Activated CD4-positive, alpha-beta memory T cell treated with anti-CD3 and anti-CD28 coated beads for 36 hours (primary cell): ENCODE measurements at regions of chr5 and their contacts with region 1.

Region 1: GRCh38 chr5:143182901-143183820 is 220.3 kb downstream of the NR3C1 start:
- DNase-seq: peak; percentile 89
- H3K4me3 Mint-ChIP-seq: peak overlapping the region; percentile 57
- H3K27ac Mint-ChIP-seq: peak overlapping the region; percentile 90
- H3K4me1 Mint-ChIP-seq: peaks cover 56% of the 10 kb centered on the region
- H3K27me3 Mint-ChIP-seq: no peaks in the 10 kb centered on the region

Region 2: GRCh38 chr5:142685418-142686209 is 497.5 kb before region 1 on chr5 and contains the start of gene FGF1:
- CTCF ChIA-PET with region 1: no interaction called
- POLR2A ChIA-PET with region 1: no interaction called
- intact Hi-C with region 1: no loop called
- DNase-seq: no peak
- H3K4me3 Mint-ChIP-seq: no peak within 1 kb of the TSS
- H3K27ac Mint-ChIP-seq: no peak within 1 kb of the TSS
- H3K4me1 Mint-ChIP-seq: no peaks in the 10 kb centered on the region
- H3K27me3 Mint-ChIP-seq: peaks cover 6% of the 10 kb centered on the region
- total RNA-seq, gene FGF1: not detected

Region 3: DNA sequence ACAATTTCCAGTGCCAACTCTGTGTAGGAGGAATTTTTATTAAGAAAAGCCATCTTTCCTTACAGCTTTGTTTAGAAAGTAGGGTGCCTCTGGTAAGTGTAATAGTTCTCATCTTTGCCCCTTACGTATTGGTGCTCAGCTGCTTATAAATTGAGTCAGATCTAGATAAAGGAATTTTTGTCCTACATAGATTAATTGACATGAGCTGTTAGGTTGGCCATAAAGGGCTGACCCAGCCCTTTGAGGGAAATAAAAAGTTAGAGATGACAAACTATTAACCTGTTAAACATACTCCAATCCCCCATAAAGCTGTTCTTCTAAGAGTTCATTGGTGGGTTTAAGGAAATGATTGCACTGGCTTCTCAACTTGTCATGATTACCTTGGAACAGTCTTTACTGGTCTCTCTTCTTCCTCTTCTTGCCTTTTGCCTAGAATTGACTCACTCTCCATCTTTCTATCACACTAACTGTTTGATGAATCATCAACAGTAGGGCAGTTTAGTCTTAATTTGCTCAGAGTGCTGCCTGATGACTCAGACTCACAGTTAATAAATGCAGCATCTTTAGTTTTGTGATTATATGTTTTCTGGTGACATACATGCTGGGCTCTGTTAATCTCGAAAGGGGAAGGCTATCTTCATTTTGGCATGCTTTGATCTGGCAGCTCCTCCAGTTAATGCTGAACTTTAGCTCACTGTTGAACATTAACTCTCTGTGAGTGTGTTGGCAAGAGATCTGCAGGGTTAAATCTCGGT is 361.3 kb before region 1 on chr5:
- CTCF ChIA-PET with region 1: no interaction called
- POLR2A ChIA-PET with region 1: no interaction called
- intact Hi-C with region 1: loop called (anchors 10 kb)
- DNase-seq: peak; percentile 35
- H3K4me3 Mint-ChIP-seq: no peak overlapping the region
- H3K27ac Mint-ChIP-seq: peak overlapping the region; percentile 83
- H3K4me1 Mint-ChIP-seq: peaks cover 71% of the 10 kb centered on the region
- H3K27me3 Mint-ChIP-seq: no peaks in the 10 kb centered on the region

Region 4: DNA sequence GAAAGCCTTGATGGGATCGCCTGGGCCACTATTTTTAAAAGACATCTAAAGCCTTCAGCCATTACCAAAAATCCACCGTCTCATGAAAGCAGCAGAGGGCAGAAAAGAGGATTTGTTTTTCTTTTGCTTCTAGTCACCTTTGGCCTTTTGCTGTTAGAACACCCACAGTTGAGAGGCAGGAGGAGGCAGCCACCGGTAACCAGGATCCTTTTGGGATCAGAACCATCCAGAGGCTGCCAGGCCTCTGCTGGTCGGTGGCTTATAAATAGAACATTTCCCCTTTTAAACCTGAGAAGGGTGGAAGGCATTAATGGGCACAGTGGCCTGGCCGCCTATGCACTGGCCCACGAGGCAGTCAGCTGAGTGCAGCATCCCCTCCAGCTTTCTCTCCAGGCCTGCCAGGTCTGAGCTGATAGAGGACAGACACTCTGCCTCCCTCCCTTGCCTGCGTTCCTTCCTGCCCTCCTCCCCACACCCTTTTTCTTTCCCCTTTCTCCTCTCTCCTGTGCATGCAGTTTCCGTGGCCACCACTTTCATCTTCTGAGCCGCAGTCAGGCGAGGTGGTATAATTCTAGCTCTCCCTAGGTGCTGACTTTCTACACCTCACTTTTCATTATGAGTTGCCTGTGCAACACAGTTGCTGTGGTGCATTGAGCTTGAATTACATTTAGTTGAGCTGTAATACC is 159.6 kb before region 1 on chr5:
- CTCF ChIA-PET with region 1: no interaction called
- POLR2A ChIA-PET with region 1: no interaction called
- intact Hi-C with region 1: loop called (anchors 2 kb)
- DNase-seq: peak; percentile 85
- H3K4me3 Mint-ChIP-seq: no peak overlapping the region
- H3K27ac Mint-ChIP-seq: peak overlapping the region; percentile 59
- H3K4me1 Mint-ChIP-seq: peaks cover 53% of the 10 kb centered on the region
- H3K27me3 Mint-ChIP-seq: no peaks in the 10 kb centered on the region

Region 5: GRCh38 chr5:143051244-143052058 is 131.7 kb before region 1 on chr5:
- CTCF ChIA-PET with region 1: no interaction called
- POLR2A ChIA-PET with region 1: interaction called, 3 read pairs
- intact Hi-C with region 1: loop called (anchors 1 kb)
- DNase-seq: no peak
- H3K4me3 Mint-ChIP-seq: no peak overlapping the region
- H3K27ac Mint-ChIP-seq: no peak overlapping the region
- H3K4me1 Mint-ChIP-seq: peaks cover 66% of the 10 kb centered on the region
- H3K27me3 Mint-ChIP-seq: no peaks in the 10 kb centered on the region

Region 6: DNA sequence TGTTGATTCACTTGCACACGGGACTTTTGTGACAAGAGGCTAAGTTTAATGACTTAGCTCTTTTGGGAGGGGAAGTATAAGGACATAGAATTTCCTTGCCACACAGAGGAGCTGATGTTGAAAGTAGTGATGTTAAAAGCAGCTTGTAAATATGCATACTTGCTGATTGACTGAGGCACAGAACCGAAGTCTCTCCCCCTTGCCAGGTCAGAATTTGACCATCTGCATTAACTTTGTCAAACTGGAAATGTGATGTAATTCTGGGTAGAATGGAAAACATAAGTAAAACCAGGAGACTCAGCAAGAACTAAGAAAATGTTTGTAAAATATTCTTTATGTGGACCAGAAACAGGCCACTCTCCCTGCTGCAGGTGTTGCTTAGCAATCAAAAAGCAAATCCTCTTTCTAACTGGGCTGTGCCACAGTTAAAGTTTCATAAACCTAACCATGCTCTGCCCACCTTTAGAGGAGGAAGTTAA is 63.8 kb before region 1 on chr5:
- CTCF ChIA-PET with region 1: no interaction called
- POLR2A ChIA-PET with region 1: no interaction called
- intact Hi-C with region 1: loop called (anchors 1 kb)
- DNase-seq: peak; percentile 27
- H3K4me3 Mint-ChIP-seq: no peak overlapping the region
- H3K27ac Mint-ChIP-seq: peak overlapping the region; percentile 82
- H3K4me1 Mint-ChIP-seq: peaks cover 41% of the 10 kb centered on the region
- H3K27me3 Mint-ChIP-seq: no peaks in the 10 kb centered on the region

Region 7: DNA sequence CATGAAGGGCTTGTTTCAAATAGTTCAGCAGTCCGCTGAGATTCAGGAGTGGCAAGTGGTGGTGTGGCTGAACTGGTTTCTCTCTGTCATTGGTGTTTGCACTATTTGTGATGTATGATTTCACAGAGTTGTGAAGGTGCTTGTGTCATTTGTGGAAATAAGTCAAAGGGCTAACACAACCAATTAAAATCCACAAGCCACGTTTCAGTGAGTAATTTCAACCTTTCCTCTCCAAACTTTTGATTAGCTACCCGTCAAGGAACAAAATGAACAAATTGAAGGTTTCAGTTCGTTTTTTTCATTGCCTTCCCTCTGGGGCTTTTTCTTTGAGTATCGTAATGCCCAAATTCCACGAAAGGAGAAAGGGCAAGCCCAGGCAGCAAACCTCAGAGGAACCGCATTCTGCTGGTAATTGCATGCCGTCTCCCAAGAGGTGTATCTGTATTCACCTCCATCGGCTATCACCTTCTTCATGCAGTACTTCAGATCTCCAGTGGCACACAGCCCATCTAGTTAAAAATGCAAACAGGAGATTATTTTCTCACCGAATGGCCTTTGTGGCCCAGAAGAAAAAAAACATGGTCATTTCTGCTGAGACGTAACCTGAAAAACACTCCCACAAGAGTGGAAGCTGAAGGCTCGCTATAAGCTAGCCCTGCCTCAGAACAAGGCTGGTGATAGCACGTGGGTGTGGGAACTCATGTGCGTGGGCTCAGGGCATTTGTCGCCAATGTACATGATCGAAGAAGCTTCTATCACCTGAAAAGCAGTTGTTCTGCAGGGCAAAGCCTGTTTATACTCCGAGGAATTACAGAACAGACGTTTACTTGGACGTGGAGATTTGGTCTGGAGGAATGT is 23.3 kb after region 1 on chr5:
- CTCF ChIA-PET with region 1: interaction called, 3 read pairs
- POLR2A ChIA-PET with region 1: interaction called, 4 read pairs
- intact Hi-C with region 1: loop called (anchors 2 kb)
- DNase-seq: peak; percentile 65
- H3K4me3 Mint-ChIP-seq: peak overlapping the region; percentile 5
- H3K27ac Mint-ChIP-seq: peak overlapping the region; percentile 73
- H3K4me1 Mint-ChIP-seq: peaks cover 35% of the 10 kb centered on the region
- H3K27me3 Mint-ChIP-seq: peaks cover 2% of the 10 kb centered on the region

Region 8: DNA sequence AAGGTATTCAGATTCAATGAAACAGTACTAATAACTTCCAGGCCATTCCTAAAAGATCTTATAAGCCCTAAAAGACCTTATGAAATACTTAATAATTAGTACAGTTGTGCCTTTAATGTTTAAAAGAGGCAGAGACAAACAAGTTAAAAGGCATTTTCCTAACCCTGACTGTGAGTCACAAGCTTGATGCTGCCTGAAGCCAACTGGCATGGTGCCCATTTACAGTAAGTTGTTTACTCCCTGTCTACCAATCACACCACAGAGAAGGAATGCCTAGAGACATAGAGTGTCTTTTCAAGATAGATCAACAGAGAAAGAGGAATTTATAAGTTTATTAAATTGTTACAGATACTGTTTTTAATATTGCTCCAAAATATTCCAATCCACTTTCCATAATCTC is 172.6 kb after region 1 on chr5:
- CTCF ChIA-PET with region 1: no interaction called
- POLR2A ChIA-PET with region 1: no interaction called
- intact Hi-C with region 1: loop called (anchors 5 kb)
- DNase-seq: peak; percentile 50
- H3K4me3 Mint-ChIP-seq: no peak overlapping the region
- H3K27ac Mint-ChIP-seq: no peak overlapping the region
- H3K4me1 Mint-ChIP-seq: peaks cover 75% of the 10 kb centered on the region
- H3K27me3 Mint-ChIP-seq: no peaks in the 10 kb centered on the region